WTC11 (cell line): ENCODE measurements at regions of chr19 and their contacts with region 1.

Region 1: GRCh38 chr19:2427429-2428320 is at the start of gene TIMM13:
- DNase-seq: peak; percentile 97
- ATAC-seq: peak; percentile 50
- H3K4me3 Mint-ChIP-seq: peak within 1 kb of the TSS; percentile 88
- H3K27ac Mint-ChIP-seq: peak within 1 kb of the TSS; percentile 97
- H3K4me1 Mint-ChIP-seq: peaks cover 27% of the 10 kb centered on the region
- H3K27me3 Mint-ChIP-seq: no peaks in the 10 kb centered on the region
- CTCF ChIP-seq: no peak
- total RNA-seq, gene TIMM13: 296 to 342 TPM (median 309 TPM) in 3 replicates

Region 2: GRCh38 chr19:2455851-2456570 is 28.3 kb after region 1 on chr19:
- CTCF ChIA-PET with region 1: interaction called, 11 read pairs
- POLR2A ChIA-PET with region 1: interaction called, 14 read pairs
- DNase-seq: peak; percentile 28
- ATAC-seq: no peak
- H3K4me3 Mint-ChIP-seq: peak overlapping the region; percentile 75
- H3K27ac Mint-ChIP-seq: no peak overlapping the region
- H3K4me1 Mint-ChIP-seq: peaks cover 20% of the 10 kb centered on the region
- H3K27me3 Mint-ChIP-seq: no peaks in the 10 kb centered on the region
- CTCF ChIP-seq: no peak

Region 3: GRCh38 chr19:2461751-2462634 is 34.3 kb after region 1 on chr19:
- CTCF ChIA-PET with region 1: interaction called, 11 read pairs
- POLR2A ChIA-PET with region 1: interaction called, 14 read pairs
- DNase-seq: peak; percentile 78
- ATAC-seq: peak; percentile 61
- H3K4me3 Mint-ChIP-seq: peak overlapping the region; percentile 77
- H3K27ac Mint-ChIP-seq: no peak overlapping the region
- H3K4me1 Mint-ChIP-seq: peaks cover 9% of the 10 kb centered on the region; the same call in 1 of the 2 replicates
- H3K27me3 Mint-ChIP-seq: no peaks in the 10 kb centered on the region
- CTCF ChIP-seq: no peak